ENCODE measurements at regions of chr1 and their contacts with region 1.

Region 1: DNA sequence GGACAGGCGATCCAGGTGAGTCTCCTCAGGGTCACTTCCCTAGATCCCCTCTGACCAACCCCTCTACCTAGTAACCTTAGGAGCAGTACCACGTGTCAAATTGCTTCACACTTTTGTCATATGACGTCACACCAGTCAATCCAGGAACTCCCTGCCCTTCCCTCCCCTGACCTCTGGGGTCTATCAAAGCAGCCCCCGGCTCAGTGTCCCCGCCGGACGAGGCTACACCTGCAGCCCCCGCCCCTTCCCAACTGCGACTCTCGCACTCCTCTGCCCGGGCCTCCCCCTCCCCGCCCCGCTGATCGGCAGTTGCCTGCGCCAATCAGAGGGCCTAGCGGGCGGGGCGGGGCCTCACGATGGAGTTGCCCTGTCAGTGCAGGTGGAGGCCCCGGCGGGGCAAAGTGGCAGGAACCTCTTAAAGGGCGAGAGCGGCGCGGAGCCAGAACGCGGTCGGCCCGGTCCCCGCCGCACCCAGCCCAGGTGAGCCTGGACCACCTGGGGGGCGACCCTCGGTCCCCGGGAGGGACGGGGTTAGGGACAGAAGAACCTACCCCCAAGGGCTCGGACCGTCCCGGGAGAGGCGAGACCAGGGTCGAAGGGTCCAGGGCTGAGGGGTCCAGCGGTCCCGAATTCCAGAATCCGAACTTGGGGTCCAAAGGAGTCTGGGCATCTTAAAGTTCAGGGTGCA is 27.5 kb upstream of the EPB41 start:
- DNase-seq: peak; percentile 87 to 97 (median 91)
- ATAC-seq: peak; percentile 83
- H3K4me3 ChIP-seq: peak overlapping the region; percentile 98
- H3K4me3 Mint-ChIP-seq: peak overlapping the region; percentile 70 to 95 (median 84)
- H3K27ac ChIP-seq: peak overlapping the region; percentile 79
- H3K27ac Mint-ChIP-seq: peak overlapping the region; percentile 81 to 98 (median 94)
- H3K4me1 ChIP-seq: peaks cover 32 to 36% of the 10 kb centered on the region in 2 donors
- H3K4me1 Mint-ChIP-seq: peaks cover 37 to 68% (median 50%) of the 10 kb centered on the region in 7 donors
- H3K27me3 ChIP-seq: no peaks in the 10 kb centered on the region
- H3K27me3 Mint-ChIP-seq: no peaks in the 10 kb centered on the region

Region 2: GRCh38 chr1:28235755-28236655 is 650.9 kb before region 1 on chr1 and contains the start of gene ATP5IF1:
- CTCF ChIA-PET with region 1: interaction called, 4 read pairs
- POLR2A ChIA-PET with region 1: no interaction called
- intact Hi-C with region 1: loop called (anchors 5 to 10 kb)
- DNase-seq: peak; percentile 78 to 96 (median 94)
- ATAC-seq: peak; percentile 97
- H3K4me3 ChIP-seq: peak within 1 kb of the TSS; percentile 95
- H3K4me3 Mint-ChIP-seq: peak within 1 kb of the TSS in 2 of 10 donors; percentile 5 to 48
- H3K27ac ChIP-seq: peak within 1 kb of the TSS; percentile 87
- H3K27ac Mint-ChIP-seq: no peak within 1 kb of the TSS
- H3K4me1 ChIP-seq: peaks cover 26 to 34% of the 10 kb centered on the region in 2 donors
- H3K4me1 Mint-ChIP-seq: peaks cover 7 to 33% (median 20%) of the 10 kb centered on the region in 7 donors
- H3K27me3 ChIP-seq: no peaks in the 10 kb centered on the region
- H3K27me3 Mint-ChIP-seq: no peaks in the 10 kb centered on the region
- total RNA-seq, gene ATP5IF1: 68.2 to 158 (median 104) TPM

Region 3: DNA sequence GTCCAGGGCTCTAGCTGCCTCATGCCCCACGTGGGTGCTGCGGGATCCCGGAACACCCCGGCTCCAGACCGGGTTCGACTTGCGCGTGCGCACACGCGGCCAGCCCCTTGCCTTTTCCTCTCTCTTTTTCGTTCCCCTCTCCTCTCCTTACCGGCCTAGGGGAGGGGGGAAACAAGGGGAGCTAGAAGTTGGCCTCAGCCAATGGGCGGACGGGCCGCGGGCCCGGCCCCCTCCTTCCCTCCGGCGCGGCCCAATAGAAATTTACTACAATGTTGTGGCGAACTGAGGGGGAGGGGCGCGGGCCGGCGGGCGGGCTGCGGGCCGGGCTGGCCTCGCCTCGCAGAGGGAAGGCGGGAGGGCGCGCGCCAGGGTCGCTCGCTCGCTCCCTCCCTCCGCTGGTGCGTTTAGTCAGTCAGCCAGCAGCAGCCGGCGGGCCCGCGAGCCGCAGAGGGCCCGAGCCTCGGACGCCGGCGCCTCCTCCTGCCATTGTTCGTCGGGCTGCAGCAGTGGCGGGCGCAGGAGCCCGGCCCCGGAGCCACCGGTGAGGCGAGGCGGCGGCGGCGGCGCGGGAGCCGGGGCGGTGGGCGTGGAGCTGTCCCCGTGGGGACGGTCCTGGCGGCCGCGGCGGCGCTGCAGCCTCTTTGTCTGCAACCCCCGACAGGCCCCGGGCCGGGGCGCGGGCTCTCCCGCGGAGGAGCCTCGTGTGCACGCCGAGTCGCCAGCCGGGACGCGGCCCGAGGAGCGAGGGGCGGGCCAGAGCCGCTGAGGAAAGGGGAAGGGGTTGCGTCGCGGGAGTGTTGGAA is 27.6 kb after region 1 on chr1 and contains the start of gene EPB41:
- CTCF ChIA-PET with region 1: interaction called, 3 read pairs
- POLR2A ChIA-PET with region 1: interaction called, 11 read pairs
- intact Hi-C with region 1: loop called (anchors 1 kb)
- DNase-seq: peak; percentile 81 to 94 (median 87)
- ATAC-seq: peak; percentile 94
- H3K4me3 ChIP-seq: peak within 1 kb of the TSS; percentile 91
- H3K4me3 Mint-ChIP-seq: peak within 1 kb of the TSS; percentile 95 to 100 (median 99)
- H3K27ac ChIP-seq: peak within 1 kb of the TSS; percentile 73
- H3K27ac Mint-ChIP-seq: peak within 1 kb of the TSS; percentile 87 to 97 (median 96)
- H3K4me1 ChIP-seq: peaks cover 34 to 37% of the 10 kb centered on the region in 2 donors
- H3K4me1 Mint-ChIP-seq: peaks cover 32 to 51% (median 39%) of the 10 kb centered on the region in 7 donors
- H3K27me3 ChIP-seq: no peaks in the 10 kb centered on the region
- H3K27me3 Mint-ChIP-seq: no peaks in the 10 kb centered on the region
- total RNA-seq, gene EPB41: 150 to 325 (median 175) TPM

Region 4: DNA sequence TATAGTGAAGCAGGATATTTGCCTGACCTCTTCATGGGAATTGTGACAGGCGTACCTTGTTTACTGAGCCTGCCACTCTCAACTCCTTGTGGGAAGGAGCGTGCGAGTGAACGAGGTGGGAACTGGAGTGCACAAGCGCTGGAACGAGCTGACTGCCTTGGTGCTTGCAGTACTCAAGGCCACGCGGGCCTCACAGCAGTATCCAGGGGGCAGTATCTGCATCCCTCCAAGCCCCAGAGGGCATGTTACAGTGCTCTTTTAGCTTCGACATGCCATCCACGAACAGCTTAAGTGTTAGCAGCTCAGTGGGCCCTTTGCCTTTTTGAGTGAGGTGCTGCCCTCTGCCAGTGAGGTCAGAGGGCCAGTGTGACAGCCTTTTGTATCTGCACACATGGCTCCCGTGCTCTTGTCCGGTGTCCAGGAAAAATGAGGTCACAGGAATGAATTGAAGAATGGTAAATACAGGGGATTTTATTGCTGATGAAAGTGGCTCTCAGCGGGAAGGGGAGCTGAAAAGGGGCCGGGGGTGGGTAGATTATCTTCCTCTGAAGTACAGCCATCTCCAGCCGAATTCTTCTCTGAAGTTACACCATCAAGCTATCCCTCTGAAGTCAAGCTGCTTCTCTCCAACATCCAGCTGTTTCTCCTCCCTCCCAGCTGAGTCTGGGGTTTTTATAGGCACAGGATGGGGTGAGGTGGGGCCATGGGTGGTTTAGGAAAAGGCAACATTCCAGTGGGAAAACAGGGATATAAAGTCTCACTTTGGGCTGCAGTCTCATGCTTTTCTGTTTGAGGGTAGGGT is 96.8 kb after region 1 on chr1:
- CTCF ChIA-PET with region 1: interaction called, 4 read pairs
- POLR2A ChIA-PET with region 1: interaction called, 4 read pairs
- intact Hi-C with region 1: loop called in 1 of 2 experiments (anchors 1 kb)
- DNase-seq: peak in 2 of 9 donors; percentile 13 to 34
- ATAC-seq: peak; percentile 38
- H3K4me3 ChIP-seq: no peak overlapping the region
- H3K4me3 Mint-ChIP-seq: peak overlapping the region in 6 of 10 donors; percentile 16 to 45 (median 32)
- H3K27ac ChIP-seq: no peak overlapping the region
- H3K27ac Mint-ChIP-seq: peak overlapping the region in 3 of 9 donors; percentile 19 to 77 (median 57)
- H3K4me1 ChIP-seq: peaks cover 0 to 16% of the 10 kb centered on the region in 2 donors
- H3K4me1 Mint-ChIP-seq: peaks cover 28 to 83% (median 75%) of the 10 kb centered on the region in 7 donors
- H3K27me3 ChIP-seq: no peaks in the 10 kb centered on the region
- H3K27me3 Mint-ChIP-seq: no peaks in the 10 kb centered on the region

Region 5: DNA sequence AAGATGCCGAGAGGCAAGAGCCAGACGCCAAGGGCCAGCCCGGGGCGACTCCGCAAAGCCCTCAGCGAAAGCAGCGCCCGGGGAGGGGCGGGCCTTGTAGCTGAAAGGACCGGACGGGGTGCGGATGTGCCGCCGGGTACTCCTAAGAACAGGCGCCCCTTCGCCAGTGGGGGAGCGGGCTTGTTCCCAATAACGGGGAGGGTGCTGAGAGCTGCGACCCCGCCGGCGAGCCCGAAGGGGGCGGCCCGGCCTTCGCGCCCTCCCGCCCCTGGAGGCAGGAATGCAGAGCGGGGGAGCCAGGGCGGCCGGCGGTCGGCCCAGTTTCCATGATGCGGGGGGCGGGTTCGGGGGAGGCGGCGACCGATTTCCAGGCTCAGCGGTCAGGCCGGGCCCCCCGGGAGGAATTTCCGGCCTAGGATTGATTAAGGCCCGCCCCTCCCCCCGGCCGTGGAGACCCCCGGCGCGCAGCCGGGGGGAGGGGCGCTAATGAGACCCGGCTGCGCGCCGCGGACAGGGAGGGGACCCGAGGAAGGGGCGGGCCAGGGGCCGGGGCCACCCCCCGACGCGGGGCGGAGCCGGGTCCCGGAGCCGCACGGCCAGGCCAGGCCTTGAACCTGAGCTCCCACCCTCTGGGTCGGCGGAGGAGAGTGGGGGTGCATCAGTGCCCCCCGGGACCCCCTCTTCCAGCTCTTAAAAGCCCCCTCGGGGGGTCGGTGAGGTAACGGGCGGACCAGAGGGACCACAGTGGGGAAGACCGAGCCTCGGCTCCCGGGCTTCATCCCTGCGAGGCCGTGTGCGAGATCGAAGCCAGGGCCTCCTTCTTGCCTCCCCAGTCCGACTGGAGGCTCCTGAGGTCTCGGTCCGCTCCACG is 237.7 kb after region 1 on chr1:
- CTCF ChIA-PET with region 1: no interaction called
- POLR2A ChIA-PET with region 1: no interaction called
- intact Hi-C with region 1: loop called (anchors 1 kb)
- DNase-seq: peak; percentile 27 to 71 (median 46)
- ATAC-seq: peak; percentile 46
- H3K4me3 ChIP-seq: peak overlapping the region; percentile 48
- H3K4me3 Mint-ChIP-seq: peak overlapping the region; percentile 27 to 94 (median 74)
- H3K27ac ChIP-seq: no peak overlapping the region
- H3K27ac Mint-ChIP-seq: no peak overlapping the region
- H3K4me1 ChIP-seq: peaks cover 6 to 11% of the 10 kb centered on the region in 2 donors
- H3K4me1 Mint-ChIP-seq: peaks cover 3 to 14% (median 9%) of the 10 kb centered on the region in 7 donors
- H3K27me3 ChIP-seq: peaks cover 0 to 12% of the 10 kb centered on the region in 2 donors
- H3K27me3 Mint-ChIP-seq: peaks cover 9 to 41% (median 13%) of the 10 kb centered on the region in 5 donors

Region 6: GRCh38 chr1:29202584-29203340 is 315.9 kb after region 1 on chr1:
- CTCF ChIA-PET with region 1: interaction called, 36 read pairs
- POLR2A ChIA-PET with region 1: no interaction called
- intact Hi-C with region 1: loop called (anchors 1 kb)
- DNase-seq: peak; percentile 58 to 91 (median 76)
- ATAC-seq: peak; percentile 94
- H3K4me3 ChIP-seq: no peak overlapping the region
- H3K4me3 Mint-ChIP-seq: no peak overlapping the region
- H3K27ac ChIP-seq: no peak overlapping the region
- H3K27ac Mint-ChIP-seq: no peak overlapping the region
- H3K4me1 ChIP-seq: no peaks in the 10 kb centered on the region
- H3K4me1 Mint-ChIP-seq: peaks cover 0 to 13% (median 3%) of the 10 kb centered on the region in 7 donors
- H3K27me3 ChIP-seq: no peaks in the 10 kb centered on the region
- H3K27me3 Mint-ChIP-seq: no peaks in the 10 kb centered on the region

Region 7: GRCh38 chr1:29218223-29218622 is 331.3 kb after region 1 on chr1:
- CTCF ChIA-PET with region 1: no interaction called
- POLR2A ChIA-PET with region 1: no interaction called
- intact Hi-C with region 1: no loop called
- DNase-seq: no peak
- ATAC-seq: no peak
- H3K4me3 ChIP-seq: no peak overlapping the region
- H3K4me3 Mint-ChIP-seq: no peak overlapping the region
- H3K27ac ChIP-seq: no peak overlapping the region
- H3K27ac Mint-ChIP-seq: no peak overlapping the region
- H3K4me1 ChIP-seq: no peaks in the 10 kb centered on the region
- H3K4me1 Mint-ChIP-seq: peaks cover 0 to 5% (median 0%) of the 10 kb centered on the region in 7 donors
- H3K27me3 ChIP-seq: no peaks in the 10 kb centered on the region
- H3K27me3 Mint-ChIP-seq: no peaks in the 10 kb centered on the region